ENCODE measurements at regions of chr2 and their contacts with region 1.

Region 1: DNA sequence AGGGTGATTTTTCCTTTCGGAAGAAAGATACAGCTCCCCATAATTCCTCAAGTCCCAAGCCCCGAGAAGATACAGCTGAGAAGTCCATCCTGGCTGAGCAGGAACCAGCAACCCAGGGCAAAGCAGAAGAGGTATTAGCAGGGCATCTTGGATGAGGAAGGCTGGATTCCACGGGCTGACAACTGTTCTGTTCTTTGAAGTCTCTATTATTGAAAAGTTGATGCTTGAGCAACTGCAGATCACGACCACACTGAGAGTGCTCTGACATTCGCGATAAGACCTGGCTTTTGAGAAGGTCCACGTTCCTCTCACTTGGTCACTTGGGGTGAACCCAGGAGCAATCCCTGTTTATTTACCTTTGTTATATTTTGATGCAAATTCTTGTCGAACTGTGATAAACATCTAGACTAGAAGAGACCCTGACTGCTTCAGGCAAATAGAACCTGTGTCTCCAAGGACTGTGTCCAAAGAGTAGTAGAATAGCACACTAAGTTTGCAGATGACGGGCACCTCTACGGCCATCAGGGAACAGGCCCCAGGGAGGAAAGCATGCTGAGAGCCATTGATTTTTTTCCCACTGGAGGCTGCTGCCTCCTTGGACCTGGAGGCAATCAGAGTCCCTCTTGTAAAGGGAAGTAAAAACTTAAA is 133.1 kb downstream of the ARL4C start:
- DNase-seq: no peak
- H3K4me3 ChIP-seq: no peak overlapping the region
- H3K27ac ChIP-seq: peak overlapping the region; percentile 45 to 53
- H3K4me1 ChIP-seq: peaks cover 16% of the 10 kb centered on the region
- H3K27me3 ChIP-seq: no peaks in the 10 kb centered on the region
- CTCF ChIP-seq: no peak
- POLR2A ChIP-seq: no peak

Region 2: GRCh38 chr2:234335661-234336228 is 28.0 kb before region 1 on chr2:
- intact Hi-C with region 1: loop called (anchors 2 kb)
- DNase-seq: peak; percentile 79
- H3K4me3 ChIP-seq: no peak overlapping the region
- H3K27ac ChIP-seq: no peak overlapping the region
- H3K4me1 ChIP-seq: no peaks in the 10 kb centered on the region
- H3K27me3 ChIP-seq: no peaks in the 10 kb centered on the region
- CTCF ChIP-seq: no peak
- POLR2A ChIP-seq: no peak

Measured in prostate gland (tissue), 2 donors.